RWPE1 (cell line): ENCODE measurements at regions of chr3 and their contacts with region 1.

Region 1: GRCh38 chr3:148727247-148727646 is 29.5 kb downstream of the AGTR1 start:
- DNase-seq: peak; percentile 5
- H3K27ac ChIP-seq: no peak overlapping the region
- CTCF ChIP-seq: no peak; the same call in 1 of the 2 replicates

Region 2: DNA sequence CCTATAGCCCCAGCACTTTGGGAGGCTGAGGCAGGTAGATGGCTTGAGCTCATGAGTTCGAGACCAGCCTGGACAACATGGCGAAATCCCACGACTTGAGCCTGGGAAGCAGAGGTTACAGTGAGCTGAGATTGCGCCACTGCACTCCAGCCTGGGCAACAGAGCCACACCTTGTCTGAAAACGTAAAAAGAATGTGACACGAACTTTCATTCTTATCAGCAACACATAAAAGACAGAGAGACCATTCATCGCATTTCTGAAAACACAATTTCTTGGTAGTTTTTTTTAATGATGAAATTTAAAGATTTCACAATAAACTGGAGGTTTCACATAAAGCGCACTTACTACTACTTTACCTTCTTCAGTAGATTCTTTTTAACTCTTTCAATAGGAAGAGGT is 340.6 kb after region 1 on chr3:
- CTCF ChIA-PET with region 1: no interaction called
- POLR2A ChIA-PET with region 1: no interaction called
- DNase-seq: no peak
- H3K27ac ChIP-seq: no peak overlapping the region
- CTCF ChIP-seq: no peak

Region 3: GRCh38 chr3:149086232-149086988 is 359.2 kb after region 1 on chr3 and contains the start of gene HLTF:
- CTCF ChIA-PET with region 1: no interaction called
- POLR2A ChIA-PET with region 1: no interaction called
- DNase-seq: peak; percentile 97
- H3K27ac ChIP-seq: peak within 1 kb of the TSS; percentile 78
- CTCF ChIP-seq: no peak

Region 4: GRCh38 chr3:149203758-149204157 is 476.5 kb after region 1 on chr3:
- CTCF ChIA-PET with region 1: interaction called, 10 read pairs
- POLR2A ChIA-PET with region 1: no interaction called
- DNase-seq: no peak
- H3K27ac ChIP-seq: no peak overlapping the region
- CTCF ChIP-seq: no peak